ENCODE measurements at regions of chr1 and their contacts with region 1.

Region 1: GRCh38 chr1:22431965-22432364 is 19.7 kb upstream of the ZBTB40 start:
- DNase-seq: no peak
- H3K4me3 Mint-ChIP-seq: no peak overlapping the region
- H3K27ac Mint-ChIP-seq: no peak overlapping the region
- H3K4me1 Mint-ChIP-seq: peaks cover 3% of the 10 kb centered on the region
- H3K27me3 Mint-ChIP-seq: peaks cover 17% of the 10 kb centered on the region

Region 2: DNA sequence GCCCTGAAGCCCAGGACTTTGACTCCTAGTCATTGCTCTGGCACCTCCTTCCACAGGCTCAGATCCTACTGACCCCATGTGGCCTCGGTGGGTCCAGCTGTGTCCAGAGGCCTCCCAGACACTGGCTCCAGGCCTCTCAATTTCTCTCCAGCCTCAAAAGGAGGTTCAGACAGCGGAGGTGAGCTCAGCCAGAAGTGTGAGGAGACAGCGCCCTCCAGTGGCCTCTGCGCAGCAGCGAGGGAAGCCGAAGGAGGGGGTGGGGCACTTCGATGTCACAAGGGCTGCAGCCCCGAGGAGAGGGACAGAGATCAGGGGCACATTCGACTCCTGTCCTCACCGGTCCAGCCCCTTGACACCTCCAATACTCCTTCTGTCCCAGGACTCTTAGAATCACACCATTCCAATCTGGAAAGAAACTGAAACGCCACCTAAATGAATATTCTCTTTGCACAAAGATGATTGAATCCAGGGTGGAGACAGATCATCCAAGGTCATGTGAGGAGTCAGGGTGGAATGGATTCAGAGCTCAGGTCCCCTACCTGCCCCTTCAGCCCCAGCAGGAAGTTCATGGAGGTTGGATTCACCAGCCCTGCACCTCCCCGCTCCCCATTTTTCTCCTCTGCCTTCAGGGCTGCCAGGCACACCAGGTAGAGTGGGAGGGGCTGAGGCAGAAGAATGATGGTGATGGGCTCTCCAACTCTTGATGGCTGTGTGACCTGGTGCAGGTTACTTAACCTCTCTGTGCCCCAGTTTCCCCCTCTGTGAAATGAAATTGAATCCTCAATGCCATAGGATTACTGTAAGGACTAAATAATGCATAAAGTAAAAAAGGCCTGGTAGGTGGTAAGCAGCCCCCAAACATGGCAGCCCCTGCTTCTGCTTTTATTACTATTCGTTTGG is 15.2 kb before region 1 on chr1:
- CTCF ChIA-PET with region 1: interaction called, 12 read pairs
- POLR2A ChIA-PET with region 1: no interaction called
- DNase-seq: peak; percentile 79
- H3K4me3 Mint-ChIP-seq: no peak overlapping the region
- H3K27ac Mint-ChIP-seq: no peak overlapping the region
- H3K4me1 Mint-ChIP-seq: peaks cover 4% of the 10 kb centered on the region
- H3K27me3 Mint-ChIP-seq: peaks cover 28% of the 10 kb centered on the region

Region 3: GRCh38 chr1:22442212-22442882 is 10.4 kb after region 1 on chr1:
- CTCF ChIA-PET with region 1: no interaction called
- POLR2A ChIA-PET with region 1: no interaction called
- DNase-seq: no peak
- H3K4me3 Mint-ChIP-seq: no peak overlapping the region
- H3K27ac Mint-ChIP-seq: no peak overlapping the region
- H3K4me1 Mint-ChIP-seq: no peaks in the 10 kb centered on the region
- H3K27me3 Mint-ChIP-seq: peaks cover 18% of the 10 kb centered on the region

Region 4: DNA sequence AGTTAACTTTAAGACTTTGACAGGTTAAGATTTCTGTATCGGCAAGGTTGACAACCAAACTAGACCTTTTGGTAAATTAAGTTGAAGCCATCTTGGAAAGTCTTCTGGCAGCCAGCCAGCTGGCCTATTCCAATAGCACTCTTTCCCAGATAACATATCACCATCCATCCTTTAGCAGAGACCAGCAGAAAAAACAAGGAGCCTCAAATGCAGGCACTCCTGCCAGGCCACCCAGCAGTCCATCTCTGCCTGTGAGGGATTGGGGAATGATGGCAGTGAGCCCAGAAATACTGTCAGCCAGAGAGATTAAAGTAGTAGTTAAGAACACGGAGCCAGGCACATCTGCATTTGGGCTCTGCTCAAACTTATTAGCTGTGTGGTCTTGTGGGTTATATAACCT is 39.1 kb after region 1 on chr1:
- CTCF ChIA-PET with region 1: no interaction called
- POLR2A ChIA-PET with region 1: no interaction called
- DNase-seq: no peak
- H3K4me3 Mint-ChIP-seq: no peak overlapping the region
- H3K27ac Mint-ChIP-seq: no peak overlapping the region
- H3K4me1 Mint-ChIP-seq: no peaks in the 10 kb centered on the region
- H3K27me3 Mint-ChIP-seq: no peaks in the 10 kb centered on the region

Measured in activated CD4-positive, alpha-beta T cell treated with anti-CD3 and anti-CD28 coated beads, Interleukin-2, amount 10 ng/mL, durations not matched to agents 7 days and 5 days (primary cell).